ENCODE measurements at regions of chr3 and their contacts with region 1.

Region 1: DNA sequence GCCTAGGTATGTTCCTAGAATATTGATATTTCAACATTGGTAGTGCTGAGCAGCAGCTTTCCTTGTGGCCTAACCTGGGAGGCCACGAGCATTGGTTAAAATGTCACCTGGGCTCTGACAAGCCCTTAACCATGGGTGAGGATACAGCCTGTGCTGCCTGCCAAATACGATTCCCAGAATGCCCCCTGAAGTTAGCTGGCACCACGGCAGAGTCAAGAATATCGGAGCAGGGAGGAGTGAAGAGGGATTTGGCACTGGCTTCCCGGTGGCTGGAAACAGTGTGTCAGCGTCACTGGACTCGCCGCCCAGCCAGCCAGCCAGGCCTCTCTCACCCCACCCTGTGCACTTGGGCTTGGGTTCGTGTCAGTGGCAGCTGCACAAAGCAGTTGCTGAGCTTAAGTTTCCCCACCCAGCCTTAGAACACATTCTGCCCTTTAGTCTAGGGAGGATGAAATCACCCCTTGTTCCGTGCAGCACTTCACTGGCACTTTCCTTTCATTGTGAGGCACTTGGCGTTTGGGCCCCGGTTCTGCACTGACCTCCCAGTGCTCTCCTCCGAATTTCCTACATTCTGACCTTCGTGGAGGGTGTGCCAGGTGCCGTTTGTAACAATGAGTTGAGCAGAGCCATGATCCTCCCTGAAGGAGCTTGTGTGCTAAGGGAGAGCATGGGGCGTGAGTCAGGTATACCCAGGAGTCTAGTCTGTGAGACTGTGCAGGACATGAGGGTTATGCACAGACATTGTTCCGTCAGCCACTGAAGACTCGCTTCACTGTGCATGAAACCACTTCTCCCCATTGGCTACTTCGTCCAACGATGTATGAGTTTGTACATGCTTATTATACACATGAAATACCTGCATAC is 152.8 kb upstream of the BHLHE40 start:
- DNase-seq: peak; percentile 68
- H3K4me3 Mint-ChIP-seq: peak overlapping the region; percentile 55
- H3K27ac Mint-ChIP-seq: peak overlapping the region; percentile 92
- H3K4me1 Mint-ChIP-seq: peaks cover 61% of the 10 kb centered on the region
- H3K27me3 Mint-ChIP-seq: no peaks in the 10 kb centered on the region
- CTCF ChIP-seq: no peak

Region 2: DNA sequence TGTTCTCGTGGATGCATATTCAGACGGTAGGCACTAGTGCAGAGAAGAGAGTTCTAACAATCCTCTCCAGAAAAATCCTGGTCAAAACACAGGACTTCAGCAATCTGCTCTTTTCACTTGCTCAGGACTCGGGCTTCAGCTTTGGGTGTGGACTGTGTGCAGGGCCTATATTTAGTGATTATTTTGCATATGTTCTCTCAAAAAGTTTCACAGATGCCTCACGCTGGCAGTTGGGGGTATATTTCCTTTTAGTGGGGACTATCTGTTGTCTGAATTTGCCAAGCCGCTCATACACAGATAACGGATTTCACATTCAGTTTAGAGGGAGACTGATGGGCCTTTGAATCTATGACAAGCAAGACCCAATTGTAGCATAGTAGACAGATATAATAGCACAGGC is 1081.6 kb before region 1 on chr3:
- CTCF ChIA-PET with region 1: no interaction called
- POLR2A ChIA-PET with region 1: no interaction called
- intact Hi-C with region 1: no loop called
- DNase-seq: no peak
- H3K4me3 Mint-ChIP-seq: no peak overlapping the region
- H3K27ac Mint-ChIP-seq: no peak overlapping the region
- H3K4me1 Mint-ChIP-seq: no peaks in the 10 kb centered on the region
- H3K27me3 Mint-ChIP-seq: no peaks in the 10 kb centered on the region
- CTCF ChIP-seq: no peak

Region 3: GRCh38 chr3:4633078-4634004 is 193.1 kb before region 1 on chr3:
- CTCF ChIA-PET with region 1: no interaction called
- POLR2A ChIA-PET with region 1: no interaction called
- intact Hi-C with region 1: no loop called
- DNase-seq: peak; percentile 63
- H3K4me3 Mint-ChIP-seq: no peak overlapping the region
- H3K27ac Mint-ChIP-seq: no peak overlapping the region
- H3K4me1 Mint-ChIP-seq: no peaks in the 10 kb centered on the region
- H3K27me3 Mint-ChIP-seq: no peaks in the 10 kb centered on the region
- CTCF ChIP-seq: peak; percentile 79

Region 4: DNA sequence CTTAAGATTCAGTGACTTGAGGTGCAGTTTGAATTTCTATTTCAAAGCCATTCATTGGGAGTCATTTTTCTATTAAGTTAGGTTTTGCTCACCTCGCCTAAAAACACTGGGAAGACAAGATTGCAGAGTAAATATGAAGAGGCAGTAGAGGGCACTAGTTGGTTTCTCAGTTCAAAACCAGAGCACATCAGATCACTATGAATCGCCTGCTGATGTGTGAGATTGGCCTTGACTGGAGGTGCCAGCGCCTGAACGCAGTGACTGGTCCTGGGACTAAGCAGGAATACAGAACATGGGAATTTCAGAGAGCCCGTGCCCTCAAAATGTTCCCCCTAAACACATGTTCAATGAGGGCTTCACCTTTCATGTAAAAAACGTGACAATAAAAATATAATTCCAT is 104.4 kb before region 1 on chr3:
- CTCF ChIA-PET with region 1: interaction called, 11 read pairs
- POLR2A ChIA-PET with region 1: interaction called, 4 read pairs
- intact Hi-C with region 1: loop called (anchors 5 kb)
- DNase-seq: peak; percentile 87
- H3K4me3 Mint-ChIP-seq: no peak overlapping the region
- H3K27ac Mint-ChIP-seq: no peak overlapping the region
- H3K4me1 Mint-ChIP-seq: peaks cover 18% of the 10 kb centered on the region
- H3K27me3 Mint-ChIP-seq: no peaks in the 10 kb centered on the region
- CTCF ChIP-seq: peak; percentile 59

Region 5: GRCh38 chr3:4741404-4742307 is 84.8 kb before region 1 on chr3:
- CTCF ChIA-PET with region 1: no interaction called
- POLR2A ChIA-PET with region 1: interaction called, 4 read pairs
- intact Hi-C with region 1: loop called (anchors 5 kb)
- DNase-seq: peak; percentile 99
- H3K4me3 Mint-ChIP-seq: no peak overlapping the region
- H3K27ac Mint-ChIP-seq: peak overlapping the region; percentile 14
- H3K4me1 Mint-ChIP-seq: peaks cover 32% of the 10 kb centered on the region
- H3K27me3 Mint-ChIP-seq: no peaks in the 10 kb centered on the region
- CTCF ChIP-seq: no peak

Region 6: DNA sequence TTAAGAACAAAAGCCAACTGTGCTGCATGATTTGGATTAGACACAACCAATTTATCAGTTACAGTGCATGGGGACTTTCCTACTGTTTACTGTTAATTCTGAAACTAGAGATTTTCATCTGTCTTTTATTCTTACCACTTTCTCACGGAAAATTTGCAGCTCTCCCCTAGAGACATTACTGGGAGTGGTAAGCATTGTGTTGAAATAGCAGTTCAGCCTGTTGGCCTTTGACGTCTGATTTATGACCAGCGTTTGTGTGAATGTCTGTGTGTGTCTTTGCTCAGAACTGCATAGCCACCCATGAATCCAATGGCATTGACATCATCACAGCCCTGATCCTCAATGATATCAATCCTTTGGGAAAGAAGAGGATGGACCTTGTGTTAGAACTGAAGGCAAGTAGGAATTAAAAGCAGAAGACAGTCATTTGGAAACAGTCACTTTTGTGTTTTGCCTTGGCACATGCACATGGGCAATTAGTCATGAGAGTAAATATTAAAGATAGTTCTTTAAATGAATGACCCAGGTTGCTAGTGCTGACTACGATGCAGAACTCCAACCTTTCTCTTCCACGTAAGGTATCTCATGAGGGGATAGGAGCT is 49.4 kb before region 1 on chr3:
- CTCF ChIA-PET with region 1: no interaction called
- POLR2A ChIA-PET with region 1: interaction called, 16 read pairs
- intact Hi-C with region 1: no loop called
- DNase-seq: peak; percentile 79
- H3K4me3 Mint-ChIP-seq: no peak overlapping the region
- H3K27ac Mint-ChIP-seq: peak overlapping the region; percentile 80
- H3K4me1 Mint-ChIP-seq: peaks cover 11% of the 10 kb centered on the region
- H3K27me3 Mint-ChIP-seq: no peaks in the 10 kb centered on the region
- CTCF ChIP-seq: no peak